ENCODE measurements at regions of chr3 and their contacts with region 1.

Region 1: GRCh38 chr3:56251343-56251945 is 216.8 kb downstream of the ERC2 start:
- DNase-seq: peak; percentile 6
- H3K4me3 ChIP-seq: no peak overlapping the region
- H3K27ac ChIP-seq: no peak overlapping the region
- H3K27me3 ChIP-seq: no peaks in the 10 kb centered on the region
- CTCF ChIP-seq: peak; percentile 80

Region 2: DNA sequence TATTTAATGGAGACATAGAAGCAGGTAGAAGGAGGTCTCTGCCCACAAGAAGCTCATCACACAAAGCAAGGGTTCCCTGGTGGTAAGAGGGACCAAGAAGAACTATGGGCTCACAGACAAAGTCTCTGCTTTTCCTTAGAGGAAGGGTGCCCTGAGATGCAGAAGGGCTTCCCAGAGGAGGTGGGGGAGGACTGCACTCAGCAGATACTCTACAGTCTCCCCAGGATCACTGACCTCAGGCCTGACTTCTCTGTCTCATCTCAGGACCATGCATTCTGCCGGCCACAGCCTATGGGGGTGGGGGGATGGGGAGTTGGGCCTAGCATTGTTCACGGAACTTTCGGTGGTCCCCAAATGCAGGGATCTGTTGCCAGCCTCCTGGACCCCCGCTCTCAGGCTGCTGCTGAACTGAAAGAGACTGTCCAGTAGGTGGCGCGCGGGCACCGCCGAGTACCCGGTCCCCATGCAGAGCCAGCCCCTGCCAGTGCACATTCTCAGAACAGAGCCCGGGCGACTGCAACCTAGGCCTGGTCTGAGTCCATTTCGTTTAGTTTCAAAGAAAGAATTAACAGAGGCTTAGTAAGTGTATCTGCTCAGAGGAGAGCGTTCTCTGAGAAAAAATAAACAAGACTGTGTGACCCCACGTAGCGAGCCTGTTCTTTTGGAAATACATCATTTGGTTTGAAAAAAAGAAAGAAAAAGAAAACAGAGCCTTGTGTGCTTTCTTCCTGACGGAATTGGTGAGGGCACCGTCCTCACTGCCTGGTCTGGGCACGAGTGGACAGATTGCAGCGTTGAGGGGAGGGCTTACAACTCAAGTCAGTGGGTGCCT is 1397.7 kb before region 1 on chr3:
- CTCF ChIA-PET with region 1: interaction called, 13 read pairs
- POLR2A ChIA-PET with region 1: no interaction called
- DNase-seq: peak; percentile 27
- H3K4me3 ChIP-seq: no peak overlapping the region
- H3K27ac ChIP-seq: no peak overlapping the region
- H3K27me3 ChIP-seq: no peaks in the 10 kb centered on the region
- CTCF ChIP-seq: peak; percentile 85

Region 3: DNA sequence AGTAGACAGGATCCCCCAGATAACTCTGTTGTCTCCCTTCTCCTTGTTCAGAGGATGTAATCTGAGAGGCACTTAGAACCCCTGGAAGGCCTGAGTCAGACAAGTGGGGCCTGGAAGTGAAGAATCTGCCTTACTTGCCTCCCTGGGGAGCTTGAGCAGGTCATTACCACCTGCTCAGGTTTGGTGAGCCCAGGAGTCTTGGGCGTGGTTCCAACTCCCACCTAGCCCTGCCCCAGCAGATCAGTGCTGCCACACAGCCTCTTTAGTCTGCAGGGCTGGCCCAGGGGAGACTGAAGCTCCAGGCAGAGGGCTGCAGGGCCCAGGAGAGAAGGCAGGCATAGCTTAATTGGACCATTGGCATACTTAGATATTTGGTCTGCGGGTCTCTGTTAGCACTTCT is 13.1 kb before region 1 on chr3:
- CTCF ChIA-PET with region 1: interaction called, 38 read pairs
- POLR2A ChIA-PET with region 1: no interaction called
- DNase-seq: no peak
- H3K4me3 ChIP-seq: no peak overlapping the region
- H3K27ac ChIP-seq: no peak overlapping the region
- H3K27me3 ChIP-seq: no peaks in the 10 kb centered on the region
- CTCF ChIP-seq: no peak

Region 4: DNA sequence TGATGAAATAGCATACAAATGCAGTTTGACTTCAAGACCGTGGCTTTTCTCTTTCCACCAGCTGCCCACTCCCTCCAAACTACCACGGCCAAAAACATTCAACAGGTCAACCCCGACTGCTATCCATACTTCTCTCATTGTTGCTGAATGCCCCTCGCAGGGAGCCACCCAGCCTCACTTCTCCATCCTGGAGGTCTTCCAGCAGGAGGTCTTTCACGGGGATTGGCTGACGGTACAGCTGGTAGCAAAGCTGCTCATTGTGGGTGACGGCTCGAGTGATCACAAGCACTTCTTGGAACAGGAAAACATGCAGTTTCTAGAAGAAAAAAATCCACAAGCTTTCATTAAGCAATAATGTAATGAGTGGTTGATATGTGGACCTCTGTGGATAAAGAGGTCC is 480.7 kb after region 1 on chr3:
- CTCF ChIA-PET with region 1: no interaction called
- POLR2A ChIA-PET with region 1: no interaction called
- DNase-seq: no peak
- H3K4me3 ChIP-seq: no peak overlapping the region
- H3K27ac ChIP-seq: no peak overlapping the region
- H3K27me3 ChIP-seq: no peaks in the 10 kb centered on the region
- CTCF ChIP-seq: no peak

Measured in AG04450 (cell line).